Right lobe of liver (tissue), 6 donors: ENCODE measurements at regions of chr17 and their contacts with region 1.

Region 1: GRCh38 chr17:5975661-5976060 is 94.5 kb upstream of the WSCD1 start:
- DNase-seq: no peak
- ATAC-seq: no peak
- H3K4me3 ChIP-seq: no peak overlapping the region
- H3K27ac ChIP-seq: no peak overlapping the region
- H3K4me1 ChIP-seq: no peaks in the 10 kb centered on the region
- H3K27me3 ChIP-seq: no peaks in the 10 kb centered on the region
- CTCF ChIP-seq: no peak
- POLR2A ChIP-seq: no peak

Region 2: GRCh38 chr17:5912991-5913531 is 62.6 kb before region 1 on chr17:
- intact Hi-C with region 1: loop called in 1 of 2 experiments (anchors 10 kb)
- DNase-seq: no peak
- ATAC-seq: no peak
- H3K4me3 ChIP-seq: no peak overlapping the region
- H3K27ac ChIP-seq: no peak overlapping the region
- H3K4me1 ChIP-seq: no peaks in the 10 kb centered on the region
- H3K27me3 ChIP-seq: no peaks in the 10 kb centered on the region
- CTCF ChIP-seq: no peak
- POLR2A ChIP-seq: no peak

Region 3: DNA sequence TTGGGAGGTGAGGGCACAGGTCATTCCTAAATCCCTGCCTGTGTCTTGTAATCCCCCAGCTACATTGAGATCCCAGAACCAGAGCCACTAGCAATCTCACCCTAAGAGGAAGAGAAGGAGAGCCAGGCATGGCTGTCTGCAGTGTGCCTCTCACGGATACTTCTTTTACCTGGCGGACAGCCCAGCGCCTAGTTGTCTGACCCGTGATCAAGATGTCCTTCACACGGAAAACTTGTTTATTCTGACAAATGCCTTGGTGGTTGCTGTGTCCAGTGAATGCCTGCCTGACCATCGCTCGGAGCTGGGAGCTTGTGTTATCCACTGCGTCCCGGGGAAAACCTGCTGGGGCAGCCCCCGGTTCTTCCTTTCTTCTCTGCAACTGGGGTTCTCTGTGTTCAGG is 45.9 kb before region 1 on chr17:
- intact Hi-C with region 1: no loop called
- DNase-seq: no peak
- ATAC-seq: no peak
- H3K4me3 ChIP-seq: no peak overlapping the region
- H3K27ac ChIP-seq: no peak overlapping the region
- H3K4me1 ChIP-seq: no peaks in the 10 kb centered on the region
- H3K27me3 ChIP-seq: no peaks in the 10 kb centered on the region
- CTCF ChIP-seq: no peak
- POLR2A ChIP-seq: no peak

Region 4: DNA sequence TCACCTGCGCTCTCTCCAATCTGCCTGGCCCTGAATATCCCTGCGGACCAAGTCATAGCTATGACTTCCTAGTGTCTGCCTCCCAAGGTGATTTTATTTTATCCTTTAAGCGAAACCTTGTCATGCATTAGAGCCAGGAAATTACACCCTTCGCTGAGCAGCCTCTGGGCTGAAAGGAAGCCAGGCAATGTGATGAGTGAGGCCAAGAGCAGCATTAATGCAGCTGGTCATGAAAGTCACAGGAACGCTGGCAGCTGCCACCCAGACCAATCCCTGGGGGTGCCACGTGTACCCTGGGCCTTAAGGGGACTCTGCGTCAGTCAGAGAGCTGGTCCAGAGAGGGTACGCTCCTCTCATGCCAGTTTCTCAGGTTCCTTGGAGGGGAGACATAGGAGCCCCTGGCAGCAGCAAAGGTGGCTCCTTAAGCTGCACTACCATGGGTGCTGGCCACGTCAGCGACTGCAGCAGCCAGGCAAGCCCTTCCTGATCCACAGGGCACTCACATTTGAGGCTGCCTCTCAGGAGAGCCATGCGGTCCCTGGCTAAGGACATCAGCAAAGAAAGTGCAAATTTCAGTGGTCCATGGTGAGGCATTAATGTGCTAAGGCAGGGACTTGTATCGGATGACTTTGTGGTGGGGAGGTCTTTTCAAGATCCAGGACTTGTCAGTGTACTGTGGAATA is 51.8 kb after region 1 on chr17:
- intact Hi-C with region 1: loop called in 1 of 2 experiments (anchors 10 kb)
- DNase-seq: no peak
- ATAC-seq: no peak
- H3K4me3 ChIP-seq: no peak overlapping the region
- H3K27ac ChIP-seq: no peak overlapping the region
- H3K4me1 ChIP-seq: no peaks in the 10 kb centered on the region
- H3K27me3 ChIP-seq: peaks cover 0 to 6% of the 10 kb centered on the region in 2 donors
- CTCF ChIP-seq: no peak
- POLR2A ChIP-seq: no peak